ENCODE measurements at regions of chr3 and their contacts with region 1.

Region 1: DNA sequence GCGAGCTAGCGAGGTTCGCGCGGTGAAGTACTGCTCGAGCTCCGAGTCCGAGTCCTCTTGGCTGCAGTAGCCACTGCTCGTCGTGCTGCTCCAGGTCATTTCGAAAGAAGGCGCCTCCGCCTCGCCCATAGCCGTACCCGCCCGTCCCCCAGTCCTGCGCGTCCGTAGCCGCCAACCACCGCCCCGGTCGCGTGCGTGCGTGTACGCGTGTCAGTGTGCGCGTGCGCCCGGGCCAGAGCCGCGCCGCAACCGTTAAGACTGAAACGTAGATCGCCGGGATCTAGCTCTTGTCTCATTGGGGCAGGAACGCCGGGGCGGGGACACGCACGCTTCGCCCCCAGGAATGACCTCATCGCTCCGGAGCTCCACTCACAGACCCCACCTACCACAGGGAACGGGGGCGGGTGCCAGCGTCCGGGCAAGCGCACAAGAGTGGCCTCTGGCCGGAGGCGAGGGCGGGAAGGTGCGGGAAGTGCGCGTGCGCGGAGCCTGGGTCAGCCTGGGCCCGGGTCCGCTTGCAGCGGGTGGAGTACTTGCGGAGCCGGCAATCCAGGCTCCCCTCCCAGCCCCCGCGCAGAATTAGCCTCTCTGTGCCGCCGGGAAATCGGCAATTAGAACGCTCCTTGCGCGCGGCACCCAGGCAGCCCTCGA is 3.3 kb downstream of the RASSF1 start:
- DNase-seq: peak; percentile 99
- H3K4me3 Mint-ChIP-seq: peak overlapping the region; percentile 97
- H3K27ac Mint-ChIP-seq: peak overlapping the region; percentile 92
- H3K4me1 Mint-ChIP-seq: peaks cover 57% of the 10 kb centered on the region
- H3K27me3 Mint-ChIP-seq: no peaks in the 10 kb centered on the region

Region 2: DNA sequence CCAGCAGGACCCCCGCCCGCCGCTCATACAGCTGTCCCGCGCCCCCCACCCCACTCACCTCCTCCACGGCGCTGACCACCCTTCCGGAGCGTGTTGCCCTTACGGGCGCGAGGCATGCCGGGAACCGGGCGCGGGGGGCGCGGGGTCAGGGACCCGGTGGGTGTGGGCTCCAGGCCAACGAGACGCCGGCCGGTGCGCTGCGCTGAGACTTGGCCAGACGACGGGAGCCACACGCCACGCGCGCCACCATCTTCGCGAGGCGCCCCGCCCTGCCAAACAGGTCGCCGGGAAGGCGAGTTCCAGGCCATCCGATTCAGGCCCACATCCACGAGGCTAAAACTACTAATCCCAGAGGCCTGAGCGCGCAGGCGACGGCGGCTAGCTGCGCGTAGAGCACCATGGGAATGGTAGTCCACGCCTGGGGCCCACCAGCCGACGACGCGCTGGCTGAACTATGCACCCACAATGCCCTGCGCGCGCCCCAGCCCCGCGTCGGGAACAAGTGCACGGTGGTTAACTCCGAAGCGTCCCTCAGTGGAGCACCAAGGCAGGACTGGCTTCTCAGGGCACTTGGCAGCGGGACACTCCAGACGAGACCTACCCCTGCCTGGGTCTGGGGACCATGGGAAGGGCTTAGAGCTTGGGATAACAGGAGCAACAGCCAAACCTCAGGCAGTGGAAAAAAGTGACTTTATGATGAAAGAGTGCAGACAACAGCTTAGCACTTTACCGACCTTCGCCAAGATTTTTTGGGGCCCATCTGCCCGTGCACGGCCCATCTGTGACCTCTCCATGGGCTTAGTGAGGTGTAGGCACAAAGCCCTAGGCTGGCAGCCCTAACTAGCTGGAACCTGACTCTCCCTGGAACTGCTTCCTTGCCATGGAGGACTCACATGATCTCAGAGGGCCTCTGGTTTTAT is 44.9 kb before region 1 on chr3 and contains the start of gene IFRD2:
- CTCF ChIA-PET with region 1: interaction called, 4 read pairs
- POLR2A ChIA-PET with region 1: interaction called, 34 read pairs
- intact Hi-C with region 1: no loop called
- DNase-seq: peak; percentile 98
- H3K4me3 Mint-ChIP-seq: peak within 1 kb of the TSS; percentile 92
- H3K27ac Mint-ChIP-seq: peak within 1 kb of the TSS; percentile 90
- H3K4me1 Mint-ChIP-seq: peaks cover 20% of the 10 kb centered on the region
- H3K27me3 Mint-ChIP-seq: no peaks in the 10 kb centered on the region
- total RNA-seq, gene IFRD2: 111 to 112 TPM

Region 3: GRCh38 chr3:50321336-50322114 is 15.8 kb before region 1 on chr3:
- CTCF ChIA-PET with region 1: interaction called, 16 read pairs
- POLR2A ChIA-PET with region 1: interaction called, 10 read pairs
- intact Hi-C with region 1: loop called (anchors 1 kb)
- DNase-seq: peak; percentile 88
- H3K4me3 Mint-ChIP-seq: peak overlapping the region; percentile 77
- H3K27ac Mint-ChIP-seq: peak overlapping the region; percentile 86
- H3K4me1 Mint-ChIP-seq: peaks cover 30% of the 10 kb centered on the region
- H3K27me3 Mint-ChIP-seq: no peaks in the 10 kb centered on the region

Region 4: DNA sequence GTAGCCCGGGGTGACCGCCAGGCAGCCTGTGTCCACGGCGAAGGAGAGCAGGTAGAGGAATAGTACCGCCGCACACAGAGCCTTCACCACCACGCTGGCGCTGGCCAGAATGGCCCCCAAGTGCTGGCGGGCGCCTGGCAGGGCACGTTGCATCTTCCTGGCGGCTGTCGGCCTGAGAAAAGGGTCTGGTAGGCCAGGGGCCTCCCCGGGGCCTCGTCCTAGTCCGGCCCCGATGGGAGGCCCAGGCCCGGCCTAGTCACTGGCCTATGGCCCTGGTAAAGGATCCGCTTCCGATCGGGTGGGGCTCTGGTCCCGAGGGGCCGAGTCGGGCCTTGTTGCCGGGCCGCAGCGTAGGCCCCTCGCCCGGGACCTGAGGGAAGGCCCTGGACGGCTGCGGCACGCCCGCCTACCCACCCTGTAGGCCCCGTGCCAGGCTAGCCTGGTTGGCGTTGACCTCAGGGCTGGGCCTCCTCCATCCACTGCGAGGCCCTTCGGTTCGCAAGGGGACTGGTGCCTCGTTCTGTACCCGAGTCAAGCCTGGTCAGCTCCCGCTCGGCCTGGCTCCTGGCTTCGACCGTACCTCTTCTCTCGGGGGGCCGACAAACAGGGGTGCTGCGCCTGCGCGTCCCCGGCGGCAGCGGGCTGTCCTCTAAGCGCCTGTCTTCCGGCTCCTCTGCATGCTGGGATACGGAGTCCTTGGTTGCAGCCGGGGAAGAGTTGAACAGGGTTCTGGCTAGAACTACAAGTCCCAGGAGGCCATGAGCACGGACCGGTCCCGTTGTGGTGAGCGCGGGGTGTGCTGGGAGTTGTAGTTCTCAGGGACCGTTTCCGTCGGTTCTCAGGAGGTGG is 21.8 kb after region 1 on chr3 and contains the start of gene TMEM115:
- CTCF ChIA-PET with region 1: interaction called, 16 read pairs
- POLR2A ChIA-PET with region 1: interaction called, 16 read pairs
- intact Hi-C with region 1: loop called (anchors 1 kb)
- DNase-seq: peak; percentile 97
- H3K4me3 Mint-ChIP-seq: peak within 1 kb of the TSS; percentile 95
- H3K27ac Mint-ChIP-seq: peak within 1 kb of the TSS; percentile 86
- H3K4me1 Mint-ChIP-seq: peaks cover 39% of the 10 kb centered on the region
- H3K27me3 Mint-ChIP-seq: no peaks in the 10 kb centered on the region
- total RNA-seq, gene TMEM115: 16.0 TPM

Region 5: GRCh38 chr3:50372349-50372748 is 35.0 kb after region 1 on chr3:
- CTCF ChIA-PET with region 1: no interaction called
- POLR2A ChIA-PET with region 1: no interaction called
- intact Hi-C with region 1: no loop called
- DNase-seq: no peak
- H3K4me3 Mint-ChIP-seq: no peak overlapping the region
- H3K27ac Mint-ChIP-seq: no peak overlapping the region
- H3K4me1 Mint-ChIP-seq: peaks cover 5% of the 10 kb centered on the region
- H3K27me3 Mint-ChIP-seq: no peaks in the 10 kb centered on the region